ENCODE measurements at regions of chr18 and their contacts with region 1.

Region 1: GRCh38 chr18:62714671-62715435 is 488 bp upstream of the PHLPP1 start:
- DNase-seq: peak; percentile 95
- ATAC-seq: peak; percentile 81
- H3K4me3 Mint-ChIP-seq: peak overlapping the region; percentile 81
- H3K27ac Mint-ChIP-seq: peak overlapping the region; percentile 69
- H3K4me1 Mint-ChIP-seq: peaks cover 28% of the 10 kb centered on the region
- H3K27me3 Mint-ChIP-seq: no peaks in the 10 kb centered on the region

Region 2: DNA sequence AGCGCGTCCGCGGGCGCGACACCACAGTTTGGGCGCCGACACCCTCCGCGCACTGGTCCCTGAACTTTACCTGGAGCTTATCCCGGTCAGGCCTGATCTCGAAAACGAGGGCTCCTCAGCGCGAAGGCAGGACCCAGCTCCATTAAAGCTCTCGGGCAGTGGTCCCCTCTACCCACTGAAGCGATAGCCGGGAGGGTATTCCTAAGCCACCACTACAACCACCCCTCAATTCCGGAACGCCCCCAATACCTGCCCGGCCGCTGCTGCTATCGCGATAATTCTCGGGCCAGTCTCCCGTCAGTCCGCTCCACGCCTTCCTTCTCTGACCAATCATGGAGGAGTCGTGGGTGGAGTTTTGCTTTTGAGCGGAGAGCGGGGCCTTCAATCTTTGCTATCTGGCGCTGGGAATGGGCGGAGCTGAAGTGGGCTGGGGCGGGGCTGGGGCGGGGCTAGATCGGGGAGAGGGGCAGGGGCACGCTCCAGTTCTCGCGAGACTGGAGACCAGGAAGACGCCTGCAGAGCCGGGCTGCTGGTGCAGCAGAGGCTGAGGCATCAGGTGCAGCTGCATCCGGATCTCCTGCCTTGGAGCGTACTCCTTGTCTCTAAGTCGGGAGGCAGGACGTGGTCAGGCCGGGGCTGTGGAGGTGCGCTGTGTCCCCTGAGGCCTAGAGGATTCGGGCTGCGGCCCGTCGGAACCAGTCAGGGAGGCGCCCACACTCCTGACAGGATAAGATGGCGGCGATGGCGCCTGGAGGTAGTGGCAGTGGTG is 527.9 kb before region 1 on chr18 and contains the starts of genes PIGN and RELCH:
- CTCF ChIA-PET with region 1: no interaction called
- POLR2A ChIA-PET with region 1: no interaction called
- intact Hi-C with region 1: loop called (anchors 1 kb)
- DNase-seq: peak; percentile 97
- ATAC-seq: peak; percentile 94
- H3K4me3 Mint-ChIP-seq: peak within 1 kb of the TSS; percentile 98
- H3K27ac Mint-ChIP-seq: peak within 1 kb of the TSS; percentile 96
- H3K4me1 Mint-ChIP-seq: peaks cover 43% of the 10 kb centered on the region
- H3K27me3 Mint-ChIP-seq: no peaks in the 10 kb centered on the region
- total RNA-seq, gene PIGN: 29.0 to 29.4 TPM
- total RNA-seq, gene RELCH: 20.5 to 20.7 TPM

Region 3: DNA sequence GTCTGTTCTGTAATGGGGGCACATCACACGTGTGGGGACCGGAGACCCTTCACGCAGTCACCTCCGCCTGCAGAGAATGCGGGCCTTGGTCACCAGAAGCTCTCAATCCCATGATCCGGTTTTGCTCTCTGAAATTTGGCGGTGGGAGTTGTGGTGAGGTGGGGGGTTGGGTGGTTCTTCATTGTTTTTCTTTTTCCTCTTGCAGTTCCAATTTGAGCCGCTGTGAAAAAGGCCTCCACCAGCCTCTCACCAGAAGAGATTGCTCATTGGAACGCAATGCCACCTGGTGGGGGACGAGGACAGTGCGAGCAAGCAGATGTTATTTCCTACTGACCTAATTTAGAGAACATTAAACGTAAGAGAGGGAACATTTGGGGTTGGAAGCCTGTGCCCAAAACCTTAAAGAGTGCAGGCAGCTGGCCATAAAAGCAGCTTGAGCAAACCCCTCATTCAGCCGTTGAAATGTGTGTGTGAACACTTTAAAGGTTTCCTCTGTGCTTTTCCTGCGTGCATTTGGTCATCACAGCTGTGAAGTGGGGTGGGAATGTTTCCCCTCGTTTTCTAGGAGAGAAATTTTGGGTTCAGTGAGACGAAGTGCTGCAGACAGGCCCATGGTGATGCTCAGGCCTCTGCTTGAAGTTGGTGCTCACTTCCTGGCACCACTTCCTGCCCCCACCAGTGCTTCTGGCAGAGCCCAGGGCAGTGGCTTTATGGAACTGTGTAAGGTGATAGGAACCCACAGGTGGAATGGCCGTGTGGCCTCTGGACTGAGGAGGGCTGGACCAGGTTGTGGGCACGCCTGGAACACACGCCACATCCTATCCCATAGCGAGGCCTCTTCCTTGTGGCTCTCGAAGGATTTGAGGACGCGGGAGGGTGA is 130.4 kb before region 1 on chr18:
- CTCF ChIA-PET with region 1: interaction called, 5 read pairs
- POLR2A ChIA-PET with region 1: no interaction called
- intact Hi-C with region 1: loop called (anchors 1 to 5 kb)
- DNase-seq: peak; percentile 93
- ATAC-seq: peak; percentile 71
- H3K4me3 Mint-ChIP-seq: peak overlapping the region; percentile 1
- H3K27ac Mint-ChIP-seq: peak overlapping the region; percentile 91
- H3K4me1 Mint-ChIP-seq: peaks cover 39% of the 10 kb centered on the region
- H3K27me3 Mint-ChIP-seq: no peaks in the 10 kb centered on the region

Region 4: GRCh38 chr18:62672600-62672999 is 42.3 kb before region 1 on chr18:
- CTCF ChIA-PET with region 1: no interaction called
- POLR2A ChIA-PET with region 1: no interaction called
- intact Hi-C with region 1: no loop called
- DNase-seq: no peak
- ATAC-seq: no peak
- H3K4me3 Mint-ChIP-seq: no peak overlapping the region
- H3K27ac Mint-ChIP-seq: no peak overlapping the region
- H3K4me1 Mint-ChIP-seq: peaks cover 7% of the 10 kb centered on the region
- H3K27me3 Mint-ChIP-seq: peaks cover 9% of the 10 kb centered on the region

Region 5: GRCh38 chr18:62844850-62845643 is 130.2 kb after region 1 on chr18:
- CTCF ChIA-PET with region 1: no interaction called
- POLR2A ChIA-PET with region 1: no interaction called
- intact Hi-C with region 1: loop called (anchors 1 kb)
- DNase-seq: peak; percentile 63
- ATAC-seq: peak; percentile 90
- H3K4me3 Mint-ChIP-seq: peak overlapping the region; percentile 15
- H3K27ac Mint-ChIP-seq: peak overlapping the region; percentile 91
- H3K4me1 Mint-ChIP-seq: peaks cover 40% of the 10 kb centered on the region
- H3K27me3 Mint-ChIP-seq: no peaks in the 10 kb centered on the region

Region 6: DNA sequence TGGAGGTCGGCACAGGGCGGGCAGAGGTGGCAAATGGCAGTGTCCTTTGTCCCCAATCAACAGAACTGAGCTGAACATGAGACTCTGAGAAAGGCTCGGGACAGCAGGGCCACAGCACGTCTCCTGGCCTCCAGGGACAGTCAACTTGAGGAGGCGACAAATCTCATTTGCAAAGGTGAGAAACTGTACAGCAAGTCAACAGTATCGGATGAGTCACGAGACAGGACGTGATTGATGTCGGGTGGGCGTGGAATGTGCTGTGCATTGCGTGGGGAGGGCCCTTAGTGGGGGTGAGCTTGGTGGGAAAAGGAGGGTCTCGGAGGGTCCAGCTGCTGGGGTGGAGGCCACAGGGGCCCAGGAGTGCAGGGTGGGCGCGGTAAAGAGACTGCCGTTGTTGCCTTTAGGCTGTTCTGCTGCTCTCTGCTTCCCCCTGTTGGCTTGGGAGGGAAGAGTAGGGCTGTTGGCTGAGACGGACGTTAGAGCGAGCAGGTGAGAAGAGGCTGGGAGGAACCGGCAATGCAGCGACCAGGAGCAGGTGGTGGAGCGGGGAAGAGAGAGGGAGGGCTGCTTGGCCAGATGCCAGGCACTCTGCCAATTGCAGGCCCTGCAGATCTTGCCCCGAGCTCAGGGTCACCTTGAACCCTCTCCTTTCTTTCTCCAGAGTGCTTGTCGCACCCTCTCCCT is 440.5 kb after region 1 on chr18:
- CTCF ChIA-PET with region 1: no interaction called
- POLR2A ChIA-PET with region 1: interaction called, 3 read pairs
- intact Hi-C with region 1: loop called (anchors 2 to 5 kb)
- DNase-seq: peak; percentile 89
- ATAC-seq: peak; percentile 66
- H3K4me3 Mint-ChIP-seq: peak overlapping the region; percentile 73
- H3K27ac Mint-ChIP-seq: peak overlapping the region; percentile 95
- H3K4me1 Mint-ChIP-seq: peaks cover 99% of the 10 kb centered on the region
- H3K27me3 Mint-ChIP-seq: no peaks in the 10 kb centered on the region

Region 7: GRCh38 chr18:63422087-63422809 is 707.4 kb after region 1 on chr18 and contains the start of gene VPS4B:
- CTCF ChIA-PET with region 1: no interaction called
- POLR2A ChIA-PET with region 1: no interaction called
- intact Hi-C with region 1: loop called in 1 of 2 experiments (anchors 1 kb)
- DNase-seq: peak; percentile 100
- ATAC-seq: peak; percentile 95
- H3K4me3 Mint-ChIP-seq: peak within 1 kb of the TSS; percentile 99
- H3K27ac Mint-ChIP-seq: peak within 1 kb of the TSS; percentile 95
- H3K4me1 Mint-ChIP-seq: peaks cover 30% of the 10 kb centered on the region
- H3K27me3 Mint-ChIP-seq: no peaks in the 10 kb centered on the region
- total RNA-seq, gene VPS4B: 40.7 to 48.4 TPM